T-cell (primary cell): ENCODE measurements at regions of chr3 and their contacts with region 1.

Region 1: DNA sequence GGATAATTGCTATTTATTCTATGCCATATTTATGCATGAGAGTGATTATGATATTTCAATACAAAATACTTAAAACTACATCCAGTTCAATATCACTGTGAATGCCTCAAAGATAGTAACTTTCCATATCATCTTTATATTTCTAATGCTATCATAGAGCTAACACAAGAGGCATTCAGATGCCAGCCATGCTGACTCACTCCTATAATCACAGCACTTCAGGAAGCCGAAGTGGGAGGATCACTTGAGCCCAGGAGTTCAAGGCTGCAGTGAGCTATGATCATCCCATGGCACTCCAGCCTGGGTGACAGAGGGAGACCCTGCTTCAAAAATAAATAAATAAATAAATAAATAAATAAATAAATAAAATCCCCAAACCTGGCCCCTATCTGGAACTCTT is 498.7 kb downstream of the EPHA3 start:
- DNase-seq: no peak
- ATAC-seq: no peak
- H3K4me3 ChIP-seq: no peak overlapping the region
- H3K4me3 Mint-ChIP-seq: no peak overlapping the region
- H3K27ac ChIP-seq: no peak overlapping the region
- H3K27ac Mint-ChIP-seq: no peak overlapping the region
- H3K4me1 ChIP-seq: no peaks in the 10 kb centered on the region
- H3K4me1 Mint-ChIP-seq: no peaks in the 10 kb centered on the region
- H3K27me3 ChIP-seq: no peaks in the 10 kb centered on the region
- H3K27me3 Mint-ChIP-seq: no peaks in the 10 kb centered on the region

Region 2: DNA sequence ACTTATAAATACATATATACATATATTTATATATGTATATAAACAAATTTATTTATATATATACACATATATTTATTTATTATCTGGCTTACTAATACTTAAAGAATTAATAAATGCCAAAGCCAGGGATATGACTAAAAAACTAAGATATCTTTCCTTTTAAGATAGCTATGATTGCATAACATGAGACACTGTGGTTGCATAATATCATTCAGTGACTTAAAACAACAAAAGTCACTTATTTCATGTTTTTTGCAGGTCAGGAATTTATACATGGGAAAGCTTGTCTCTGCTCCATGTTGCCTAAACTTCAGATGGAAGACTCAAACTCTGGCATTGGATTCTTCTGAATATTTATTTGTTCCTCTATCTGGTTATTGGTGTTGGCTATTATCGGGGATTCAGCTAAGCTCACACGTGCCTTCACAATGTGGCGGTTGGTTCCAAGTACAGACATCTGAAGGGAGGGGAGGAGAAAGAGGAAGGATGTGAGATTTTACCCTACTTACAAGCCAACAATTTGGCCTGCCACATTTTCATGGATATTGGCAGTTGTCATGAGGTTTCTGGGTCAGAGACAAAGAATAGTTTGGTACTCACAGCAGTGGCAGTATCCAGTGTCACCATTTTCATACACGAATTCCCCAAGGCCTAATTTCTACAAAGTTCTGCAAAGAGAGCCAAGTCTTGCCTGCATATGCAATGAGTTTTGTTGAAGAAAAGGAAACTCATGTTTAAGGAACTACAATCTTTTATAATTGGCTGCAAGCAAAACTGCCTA is 117.2 kb before region 1 on chr3:
- CTCF ChIA-PET with region 1: interaction called in 1 of 2 experiments, 13 read pairs
- POLR2A ChIA-PET with region 1: no interaction called
- DNase-seq: no peak
- ATAC-seq: no peak
- H3K4me3 ChIP-seq: no peak overlapping the region
- H3K4me3 Mint-ChIP-seq: no peak overlapping the region
- H3K27ac ChIP-seq: no peak overlapping the region
- H3K27ac Mint-ChIP-seq: no peak overlapping the region
- H3K4me1 ChIP-seq: no peaks in the 10 kb centered on the region
- H3K4me1 Mint-ChIP-seq: no peaks in the 10 kb centered on the region
- H3K27me3 ChIP-seq: no peaks in the 10 kb centered on the region
- H3K27me3 Mint-ChIP-seq: no peaks in the 10 kb centered on the region

Region 3: DNA sequence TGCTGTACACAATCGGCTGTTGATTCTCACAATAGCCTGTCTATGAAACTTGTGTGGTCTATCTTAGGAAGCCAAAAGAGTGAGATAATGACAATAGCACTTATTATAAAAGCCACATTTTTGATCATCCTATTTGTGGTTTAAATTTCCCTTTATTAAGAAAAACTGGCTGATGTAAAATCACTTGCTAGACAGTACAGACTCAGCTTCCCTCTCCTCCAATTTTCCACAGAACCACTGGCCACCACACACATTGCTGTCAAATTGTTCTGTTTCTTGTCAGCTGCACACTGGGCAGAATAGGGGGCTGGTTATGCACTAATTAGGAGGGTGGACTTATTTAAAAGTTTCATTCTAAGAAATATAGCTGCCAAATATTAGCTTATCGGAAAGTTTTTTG is 72.9 kb before region 1 on chr3:
- CTCF ChIA-PET with region 1: interaction called in 1 of 2 experiments, 13 read pairs
- POLR2A ChIA-PET with region 1: no interaction called
- DNase-seq: no peak
- ATAC-seq: no peak
- H3K4me3 ChIP-seq: no peak overlapping the region
- H3K4me3 Mint-ChIP-seq: no peak overlapping the region
- H3K27ac ChIP-seq: no peak overlapping the region
- H3K27ac Mint-ChIP-seq: no peak overlapping the region
- H3K4me1 ChIP-seq: no peaks in the 10 kb centered on the region
- H3K4me1 Mint-ChIP-seq: no peaks in the 10 kb centered on the region
- H3K27me3 ChIP-seq: no peaks in the 10 kb centered on the region
- H3K27me3 Mint-ChIP-seq: no peaks in the 10 kb centered on the region

Region 4: DNA sequence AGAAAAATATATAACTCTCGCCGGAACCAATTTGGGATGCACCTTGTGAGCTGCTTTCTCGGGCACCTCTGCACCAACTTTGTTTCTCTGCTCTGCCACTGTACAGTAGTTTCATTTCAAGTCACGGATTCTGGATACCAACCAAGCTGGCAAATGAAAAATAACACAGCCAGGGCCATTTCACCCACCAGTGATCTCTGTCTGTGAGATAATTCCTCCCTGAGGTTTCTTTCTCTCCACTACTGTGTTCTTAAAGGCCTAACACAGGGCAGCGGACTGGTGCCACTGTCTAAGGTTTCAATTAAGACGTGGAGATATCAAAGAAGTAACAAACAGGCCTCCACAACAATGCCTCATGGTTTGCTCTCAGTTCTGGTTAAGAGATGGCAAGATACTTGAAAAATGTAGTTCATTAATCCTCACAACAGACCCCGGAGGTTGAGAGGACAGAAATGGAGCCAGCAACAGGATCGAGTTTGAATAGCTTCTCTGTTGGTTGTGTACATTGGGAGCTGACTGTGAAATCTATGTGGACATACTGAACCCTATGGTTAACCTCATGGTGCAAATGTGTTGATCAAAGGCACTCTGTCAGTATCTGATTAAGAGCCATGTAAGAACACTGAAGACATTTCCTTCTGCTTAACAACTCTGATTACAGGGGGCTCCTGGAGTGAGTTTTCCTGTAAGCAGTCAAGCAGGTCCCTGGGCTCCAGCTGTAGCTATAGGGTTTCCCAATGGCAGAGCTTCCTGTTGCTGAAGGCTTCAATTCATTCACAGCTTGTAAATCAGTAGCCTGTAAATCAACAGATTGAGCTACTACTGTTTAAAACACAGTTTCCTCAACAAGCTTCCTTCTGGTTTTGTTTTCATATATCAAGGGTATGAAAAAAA is 28.3 kb before region 1 on chr3:
- CTCF ChIA-PET with region 1: no interaction called
- POLR2A ChIA-PET with region 1: no interaction called
- DNase-seq: no peak
- ATAC-seq: no peak
- H3K4me3 ChIP-seq: no peak overlapping the region
- H3K4me3 Mint-ChIP-seq: no peak overlapping the region
- H3K27ac ChIP-seq: no peak overlapping the region
- H3K27ac Mint-ChIP-seq: no peak overlapping the region
- H3K4me1 ChIP-seq: no peaks in the 10 kb centered on the region
- H3K4me1 Mint-ChIP-seq: no peaks in the 10 kb centered on the region
- H3K27me3 ChIP-seq: no peaks in the 10 kb centered on the region
- H3K27me3 Mint-ChIP-seq: no peaks in the 10 kb centered on the region